Lower leg skin (tissue), 4 donors: ENCODE measurements at regions of chr6 and their contacts with region 1.

Region 1: DNA sequence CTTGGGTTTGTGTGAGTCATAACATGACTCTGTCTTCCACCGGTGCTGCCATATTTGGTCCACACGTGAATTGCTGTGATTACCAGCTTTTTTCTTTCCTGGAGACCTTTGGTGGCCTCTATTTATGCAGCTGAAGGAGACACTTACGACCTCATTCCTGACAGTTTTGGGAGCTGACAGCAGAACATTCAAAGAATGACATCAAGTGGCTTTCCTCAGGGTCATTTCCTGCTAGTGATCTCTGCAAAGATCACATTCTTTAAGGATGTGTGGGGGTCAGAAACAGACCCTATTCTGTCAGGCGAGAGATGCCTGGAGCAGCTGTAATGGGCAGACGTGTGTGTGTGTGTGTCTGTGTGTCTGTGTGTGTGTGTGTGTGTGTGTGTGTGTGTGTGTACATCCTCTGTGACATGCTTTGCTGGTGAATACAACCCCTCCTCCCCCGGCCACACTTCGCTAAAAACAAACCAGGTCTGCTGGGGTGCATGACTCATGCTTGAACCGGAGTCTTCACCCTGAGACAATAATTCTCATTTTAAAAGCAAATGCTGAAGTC is 115.6 kb downstream of the TMEM170B start:
- DNase-seq: no peak
- H3K4me3 ChIP-seq: no peak overlapping the region
- CTCF ChIP-seq: no peak
- POLR2A ChIP-seq: no peak

Region 2: GRCh38 chr6:12233693-12234571 is 580.8 kb after region 1 on chr6:
- intact Hi-C with region 1: loop called (anchors 10 kb)
- DNase-seq: peak in 1 of 2 donors; percentile 56
- H3K4me3 ChIP-seq: no peak overlapping the region
- CTCF ChIP-seq: peak in 1 of 3 donors; percentile 58
- POLR2A ChIP-seq: no peak

Region 3: DNA sequence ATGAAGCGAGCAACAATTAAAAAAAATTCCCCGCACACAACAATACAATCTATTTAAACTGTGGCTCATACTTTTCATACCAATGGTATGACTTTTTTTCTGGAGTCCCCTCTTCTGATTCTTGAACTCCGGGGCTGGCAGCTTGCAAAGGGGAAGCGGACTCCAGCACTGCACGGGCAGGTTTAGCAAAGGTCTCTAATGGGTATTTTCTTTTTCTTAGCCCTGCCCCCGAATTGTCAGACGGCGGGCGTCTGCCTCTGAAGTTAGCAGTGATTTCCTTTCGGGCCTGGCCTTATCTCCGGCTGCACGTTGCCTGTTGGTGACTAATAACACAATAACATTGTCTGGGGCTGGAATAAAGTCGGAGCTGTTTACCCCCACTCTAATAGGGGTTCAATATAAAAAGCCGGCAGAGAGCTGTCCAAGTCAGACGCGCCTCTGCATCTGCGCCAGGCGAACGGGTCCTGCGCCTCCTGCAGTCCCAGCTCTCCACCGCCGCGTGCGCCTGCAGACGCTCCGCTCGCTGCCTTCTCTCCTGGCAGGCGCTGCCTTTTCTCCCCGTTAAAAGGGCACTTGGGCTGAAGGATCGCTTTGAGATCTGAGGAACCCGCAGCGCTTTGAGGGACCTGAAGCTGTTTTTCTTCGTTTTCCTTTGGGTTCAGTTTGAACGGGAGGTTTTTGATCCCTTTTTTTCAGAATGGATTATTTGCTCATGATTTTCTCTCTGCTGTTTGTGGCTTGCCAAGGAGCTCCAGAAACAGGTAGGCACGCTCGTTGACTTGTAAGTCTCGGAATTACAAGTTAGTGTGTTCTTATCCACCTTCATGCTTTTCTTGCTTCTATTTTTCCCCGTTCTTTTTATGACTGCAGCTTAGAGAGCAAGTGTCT is 637.1 kb after region 1 on chr6 and contains the start of gene EDN1:
- intact Hi-C with region 1: loop called (anchors 10 kb)
- DNase-seq: peak; percentile 73 to 94
- H3K4me3 ChIP-seq: peak within 1 kb of the TSS; percentile 10
- CTCF ChIP-seq: no peak
- POLR2A ChIP-seq: no peak
- total RNA-seq, gene EDN1: 11.1 to 42.6 (median 15.5) TPM

Region 4: DNA sequence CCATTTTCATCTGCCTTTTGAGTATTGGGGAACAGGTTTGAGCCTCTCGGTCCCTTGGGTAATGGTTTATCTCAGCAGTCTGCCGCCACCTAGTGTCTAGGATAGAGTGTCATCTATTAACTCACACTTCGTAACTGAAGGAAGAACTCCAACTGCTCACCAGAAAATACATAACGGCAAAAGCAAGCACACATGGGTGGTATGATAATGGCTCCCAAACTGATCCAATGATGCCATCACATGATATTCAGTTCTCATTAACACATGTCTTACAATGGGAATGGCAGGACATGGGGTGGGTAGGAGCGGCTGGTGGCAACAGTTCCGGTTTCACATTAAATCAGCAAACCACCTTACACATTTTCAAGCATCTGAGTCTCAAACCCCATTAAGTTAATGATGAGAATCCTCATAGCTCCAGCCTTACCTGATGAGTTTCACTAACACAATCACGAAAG is 952.8 kb after region 1 on chr6:
- intact Hi-C with region 1: loop called (anchors 10 kb)
- DNase-seq: peak in 1 of 2 donors; percentile 53
- H3K4me3 ChIP-seq: no peak overlapping the region
- CTCF ChIP-seq: no peak
- POLR2A ChIP-seq: no peak